Heart left ventricle (tissue), 16 donors: ENCODE measurements at regions of chr17 and their contacts with region 1.

Region 1: DNA sequence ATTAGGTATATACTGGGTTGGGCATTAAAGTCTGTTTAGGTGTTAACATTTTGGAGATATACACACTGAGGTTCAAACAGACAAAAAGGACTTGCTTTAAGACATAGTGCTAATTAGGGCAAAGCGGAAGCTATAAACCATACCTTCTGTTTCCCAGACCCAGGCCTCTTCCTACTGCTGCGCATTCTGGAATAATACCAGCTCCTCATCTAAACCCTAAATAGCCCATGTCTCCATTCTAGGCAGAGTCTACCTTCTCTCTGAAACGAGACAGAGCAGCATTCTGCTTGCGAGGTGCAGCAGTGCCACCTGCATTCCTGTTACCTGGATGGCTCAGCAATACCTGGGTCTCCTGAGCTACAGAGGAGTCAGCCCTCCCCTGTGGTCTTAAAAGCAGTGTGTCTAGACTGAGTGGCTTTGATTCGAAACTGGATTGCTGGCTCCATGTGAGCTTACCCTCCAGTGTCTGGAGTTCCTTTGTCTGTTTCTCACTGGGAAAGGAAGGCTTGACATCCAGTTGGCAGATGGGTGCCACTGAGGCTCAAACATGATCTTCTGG is 6.4 kb downstream of the YPEL2 start:
- DNase-seq: no peak
- ATAC-seq: no peak
- H3K4me3 ChIP-seq: no peak overlapping the region
- H3K27ac ChIP-seq: peak overlapping the region in 10 of 12 donors; percentile 7 to 100 (median 54)
- H3K4me1 ChIP-seq: peaks cover 12 to 98% (median 83%) of the 10 kb centered on the region in 12 donors
- H3K27me3 ChIP-seq: no peaks in the 10 kb centered on the region
- CTCF ChIP-seq: no peak
- POLR2A ChIP-seq: no peak

Region 2: GRCh38 chr17:59372138-59372857 is 34.5 kb after region 1 on chr17:
- intact Hi-C with region 1: loop called (anchors 2 to 5 kb)
- DNase-seq: peak in 4 of 5 donors; percentile 50 to 74 (median 58)
- ATAC-seq: peak; percentile 75 to 88 (median 81)
- H3K4me3 ChIP-seq: peak overlapping the region in 5 of 12 donors; percentile 4 to 36 (median 24)
- H3K27ac ChIP-seq: peak overlapping the region; percentile 89 to 99 (median 94)
- H3K4me1 ChIP-seq: peaks cover 48 to 100% (median 98%) of the 10 kb centered on the region in 12 donors
- H3K27me3 ChIP-seq: no peaks in the 10 kb centered on the region
- CTCF ChIP-seq: no peak
- POLR2A ChIP-seq: peak in 1 of 2 donors; percentile 16

Region 3: GRCh38 chr17:59400858-59401257 is 63.0 kb after region 1 on chr17:
- intact Hi-C with region 1: no loop called
- DNase-seq: no peak
- ATAC-seq: no peak
- H3K4me3 ChIP-seq: no peak overlapping the region
- H3K27ac ChIP-seq: peak overlapping the region in 9 of 12 donors; percentile 24 to 68 (median 40)
- H3K4me1 ChIP-seq: peaks cover 0 to 49% (median 16%) of the 10 kb centered on the region in 12 donors
- H3K27me3 ChIP-seq: no peaks in the 10 kb centered on the region
- CTCF ChIP-seq: no peak
- POLR2A ChIP-seq: no peak